RWPE1 (cell line): ENCODE measurements at regions of chr10 and their contacts with region 1.

Region 1: GRCh38 chr10:88835096-88835909 is 16.3 kb downstream of the ANKRD22 start:
- DNase-seq: peak; percentile 80
- H3K27ac ChIP-seq: no peak overlapping the region
- CTCF ChIP-seq: peak; percentile 83

Region 2: GRCh38 chr10:88759366-88760101 is 75.8 kb before region 1 on chr10 and contains the start of gene LIPN:
- CTCF ChIA-PET with region 1: no interaction called
- POLR2A ChIA-PET with region 1: no interaction called
- DNase-seq: no peak
- H3K27ac ChIP-seq: no peak within 1 kb of the TSS
- CTCF ChIP-seq: no peak

Region 3: DNA sequence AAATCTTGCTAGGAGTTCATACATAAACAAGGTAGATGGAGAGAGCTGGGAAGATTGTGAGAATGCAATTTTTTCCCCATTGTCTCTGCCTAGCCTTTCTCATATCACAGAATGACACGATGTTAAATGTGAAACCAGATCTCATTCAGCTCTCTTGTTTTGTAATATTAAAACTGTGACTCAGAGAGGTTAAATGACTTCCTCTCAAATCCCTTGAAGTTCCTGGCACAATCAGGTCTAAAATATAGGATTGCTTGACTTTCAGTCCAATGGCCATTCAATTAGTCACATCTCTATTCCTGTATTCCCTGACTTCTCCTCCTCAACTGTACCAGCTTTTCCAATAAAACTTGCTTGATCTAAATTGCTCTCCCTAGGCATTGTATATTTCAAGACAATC is 13.2 kb after region 1 on chr10:
- CTCF ChIA-PET with region 1: interaction called, 10 read pairs
- POLR2A ChIA-PET with region 1: no interaction called
- DNase-seq: peak; percentile 56
- H3K27ac ChIP-seq: no peak overlapping the region
- CTCF ChIP-seq: no peak

Region 4: DNA sequence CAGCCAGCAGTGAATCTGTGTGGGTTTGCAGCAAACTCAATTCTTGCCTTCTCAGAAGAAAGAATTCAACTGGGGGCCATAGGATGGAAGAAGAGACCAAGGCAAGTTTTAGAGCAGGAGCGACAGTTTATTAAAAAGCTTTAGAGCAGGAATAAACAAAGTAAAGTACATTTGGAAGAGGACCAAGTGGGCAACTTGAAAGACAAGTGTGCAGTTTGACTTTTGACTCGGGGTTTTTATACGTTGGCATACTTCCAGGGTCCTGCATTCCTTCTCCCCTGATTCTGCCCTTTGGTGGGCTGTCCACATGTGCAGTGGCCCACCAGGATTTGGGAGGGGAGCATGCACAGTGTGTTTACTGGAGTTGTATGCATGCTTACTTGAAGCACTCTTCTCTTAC is 19.4 kb after region 1 on chr10:
- CTCF ChIA-PET with region 1: interaction called, 24 read pairs
- POLR2A ChIA-PET with region 1: no interaction called
- DNase-seq: no peak
- H3K27ac ChIP-seq: no peak overlapping the region
- CTCF ChIP-seq: no peak

Region 5: DNA sequence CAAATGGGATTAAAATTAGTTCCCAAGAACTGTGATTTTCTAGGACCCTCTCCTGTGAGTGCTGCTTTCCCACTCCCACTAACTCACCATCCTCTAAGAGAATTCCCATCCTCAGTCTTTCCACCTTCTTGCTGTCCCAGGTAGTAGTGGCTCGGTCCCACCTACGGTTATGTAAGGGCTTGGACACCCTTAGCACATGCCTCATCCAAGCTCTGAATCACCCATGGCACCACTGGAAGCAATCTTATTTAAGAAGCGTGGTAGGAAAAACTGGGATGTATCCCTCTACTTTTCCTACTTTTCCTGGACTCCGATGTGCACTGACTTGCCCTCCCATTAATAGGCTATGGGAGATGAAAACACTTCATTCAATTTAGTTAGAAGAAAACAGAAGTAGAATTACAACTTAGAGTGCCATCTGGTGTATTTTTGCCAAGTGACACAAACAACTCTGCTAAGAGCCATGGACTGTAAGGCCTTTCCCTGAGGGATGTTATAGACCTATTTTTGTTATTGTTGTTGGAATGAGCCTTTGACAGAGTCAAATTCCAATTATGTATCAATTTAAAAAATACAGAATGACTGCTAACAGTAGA is 30.1 kb after region 1 on chr10:
- CTCF ChIA-PET with region 1: interaction called, 27 read pairs
- POLR2A ChIA-PET with region 1: no interaction called
- DNase-seq: peak; percentile 46
- H3K27ac ChIP-seq: no peak overlapping the region
- CTCF ChIP-seq: no peak; the same call in 1 of the 2 replicates